ENCODE measurements at regions of chr12 and their contacts with region 1.

Region 1: DNA sequence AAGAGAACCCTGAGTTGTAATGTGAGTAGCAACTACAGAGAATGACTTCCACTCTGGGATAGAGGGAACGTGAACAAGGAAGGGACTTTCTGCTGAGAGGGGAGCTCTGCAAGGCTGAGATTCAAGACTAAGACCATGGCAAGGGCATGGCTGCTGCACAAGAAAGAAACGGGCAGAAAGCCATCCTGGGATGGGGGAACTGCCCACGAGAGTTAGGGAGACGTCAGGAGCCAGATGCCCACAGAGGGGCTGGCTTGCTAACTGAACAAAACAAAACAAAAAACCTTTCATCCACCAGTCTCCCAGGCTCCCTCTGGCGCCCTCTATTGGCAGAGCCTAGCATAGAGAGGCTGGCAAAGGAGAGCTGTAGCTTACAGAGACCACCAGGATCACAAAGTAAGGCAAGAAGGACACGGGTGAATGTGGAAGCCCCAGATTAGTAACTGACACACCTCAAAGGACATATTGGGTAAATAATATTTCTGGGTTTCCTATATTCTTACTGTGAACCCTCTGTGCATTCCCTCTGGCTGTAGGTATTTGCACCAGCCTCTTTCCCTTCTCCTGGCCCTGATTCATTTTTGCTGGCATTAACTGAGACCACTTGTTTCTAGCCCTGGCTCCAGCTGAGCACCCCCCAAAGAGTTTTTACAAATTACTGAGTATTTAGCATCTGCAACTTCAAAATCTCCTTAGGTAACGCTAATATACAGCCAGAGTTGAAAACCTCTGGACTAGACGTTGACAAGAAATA is 338.3 kb downstream of the EMP1 start:
- DNase-seq: peak; percentile 57 to 73
- ATAC-seq: peak in 2 of 4 donors; percentile 42 to 57
- H3K4me3 ChIP-seq: no peak overlapping the region
- H3K27ac ChIP-seq: no peak overlapping the region
- H3K4me1 ChIP-seq: no peaks in the 10 kb centered on the region
- H3K27me3 ChIP-seq: no peaks in the 10 kb centered on the region
- CTCF ChIP-seq: peak; percentile 69

Region 2: GRCh38 chr12:13255792-13256691 is 278.8 kb before region 1 on chr12:
- intact Hi-C with region 1: no loop called
- DNase-seq: peak; percentile 92 to 95
- ATAC-seq: peak; percentile 95 to 100 (median 100)
- H3K4me3 ChIP-seq: peak overlapping the region; percentile 48
- H3K27ac ChIP-seq: no peak overlapping the region
- H3K4me1 ChIP-seq: peaks cover 6% of the 10 kb centered on the region
- H3K27me3 ChIP-seq: no peaks in the 10 kb centered on the region
- CTCF ChIP-seq: peak; percentile 87

Region 3: GRCh38 chr12:13278249-13278787 is 256.5 kb before region 1 on chr12:
- intact Hi-C with region 1: loop called (anchors 2 to 10 kb)
- DNase-seq: peak; percentile 69 to 81
- ATAC-seq: peak; percentile 82 to 98 (median 92)
- H3K4me3 ChIP-seq: peak overlapping the region; percentile 44
- H3K27ac ChIP-seq: no peak overlapping the region
- H3K4me1 ChIP-seq: no peaks in the 10 kb centered on the region
- H3K27me3 ChIP-seq: peaks cover 0 to 36% (median 2%) of the 10 kb centered on the region in 3 donors
- CTCF ChIP-seq: peak; percentile 97

Region 4: GRCh38 chr12:13289653-13290289 is 245.1 kb before region 1 on chr12:
- intact Hi-C with region 1: loop called in 1 of 2 experiments (anchors 10 kb)
- DNase-seq: peak; percentile 39 to 61
- ATAC-seq: peak in 3 of 4 donors; percentile 55 to 78 (median 57)
- H3K4me3 ChIP-seq: no peak overlapping the region
- H3K27ac ChIP-seq: no peak overlapping the region
- H3K4me1 ChIP-seq: no peaks in the 10 kb centered on the region
- H3K27me3 ChIP-seq: no peaks in the 10 kb centered on the region
- CTCF ChIP-seq: no peak

Region 5: DNA sequence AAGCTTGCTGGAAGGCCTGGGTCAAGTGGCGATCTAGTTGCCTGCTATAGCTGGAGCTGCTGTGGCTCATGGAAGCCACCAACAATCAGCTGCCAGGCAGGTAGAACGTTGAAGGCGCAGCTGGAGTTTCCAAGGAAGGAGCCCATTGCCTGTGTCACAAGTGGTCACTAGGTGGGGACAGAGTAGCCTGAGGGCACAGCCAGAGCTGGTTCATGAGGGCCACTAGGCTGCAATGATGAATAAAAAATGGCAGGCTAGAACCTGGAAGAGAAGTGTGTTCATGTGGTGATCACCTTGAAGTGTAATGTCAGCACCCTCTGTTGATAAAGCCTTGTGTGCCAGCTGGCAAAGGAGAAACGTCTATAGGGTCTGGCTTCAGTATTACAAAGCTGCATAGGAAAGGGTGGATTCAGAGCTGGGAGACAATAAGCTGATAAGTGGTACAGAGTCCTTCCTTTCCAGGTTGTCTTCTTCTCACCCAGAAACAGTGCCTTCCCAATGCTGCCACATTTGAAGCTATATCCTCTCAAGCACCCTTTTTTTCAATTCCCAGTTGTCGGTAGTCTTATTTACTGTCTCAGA is 172.5 kb before region 1 on chr12:
- intact Hi-C with region 1: loop called (anchors 5 to 10 kb)
- DNase-seq: peak; percentile 50 to 57
- ATAC-seq: peak; percentile 68 to 93 (median 86)
- H3K4me3 ChIP-seq: no peak overlapping the region
- H3K27ac ChIP-seq: no peak overlapping the region
- H3K4me1 ChIP-seq: no peaks in the 10 kb centered on the region
- H3K27me3 ChIP-seq: peaks cover 0 to 3% (median 0%) of the 10 kb centered on the region in 3 donors
- CTCF ChIP-seq: peak; percentile 83